HAP-1 (cell line): ENCODE measurements at regions of chr13 and their contacts with region 1.

Region 1: GRCh38 chr13:47774671-47774994 is 226.4 kb downstream of the SUCLA2 start:
- DNase-seq: no peak
- H3K4me3 ChIP-seq: no peak overlapping the region
- H3K4me1 ChIP-seq: no peaks in the 10 kb centered on the region
- H3K27me3 ChIP-seq: no peaks in the 10 kb centered on the region

Region 2: GRCh38 chr13:46831588-46832194 is 942.9 kb before region 1 on chr13:
- in situ Hi-C with region 1: loop called (anchors 25 kb)
- DNase-seq: peak; percentile 24 to 69
- H3K4me3 ChIP-seq: no peak overlapping the region
- H3K4me1 ChIP-seq: no peaks in the 10 kb centered on the region
- H3K27me3 ChIP-seq: peaks cover 5% of the 10 kb centered on the region; the same call in 1 of the 2 replicates

Region 3: DNA sequence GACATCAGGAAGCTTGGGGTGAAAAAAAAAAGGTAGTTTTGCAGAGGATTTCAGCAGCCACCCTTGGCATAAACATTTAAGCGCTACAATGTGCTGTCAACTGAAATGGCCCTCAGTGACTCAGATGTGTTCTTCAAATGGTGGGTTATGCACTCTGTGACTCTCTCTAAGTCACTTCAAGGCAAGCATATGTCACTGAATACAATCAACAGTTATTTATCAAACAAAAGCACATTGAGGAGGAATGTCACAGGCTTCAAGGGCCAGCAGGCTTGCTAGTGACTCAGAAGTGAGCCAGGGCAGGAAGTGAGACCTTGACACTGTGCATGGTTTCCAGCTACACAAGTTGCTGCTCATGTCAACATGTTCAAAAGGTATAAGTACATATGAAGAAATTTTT is 354.1 kb before region 1 on chr13:
- in situ Hi-C with region 1: no loop called
- DNase-seq: no peak
- H3K4me3 ChIP-seq: no peak overlapping the region
- H3K4me1 ChIP-seq: no peaks in the 10 kb centered on the region
- H3K27me3 ChIP-seq: no peaks in the 10 kb centered on the region